ENCODE measurements at regions of chr2 and their contacts with region 1.

Region 1: GRCh38 chr2:64807417-64807816 is 153.7 kb upstream of the SERTAD2 start:
- DNase-seq: peak; percentile 12
- H3K4me3 Mint-ChIP-seq: peak overlapping the region; percentile 57
- H3K27ac Mint-ChIP-seq: peak overlapping the region; percentile 80
- H3K4me1 Mint-ChIP-seq: peaks cover 37% of the 10 kb centered on the region
- H3K27me3 Mint-ChIP-seq: no peaks in the 10 kb centered on the region

Region 2: GRCh38 chr2:64488050-64488974 is 319.1 kb before region 1 on chr2:
- intact Hi-C with region 1: no loop called
- DNase-seq: peak; percentile 53
- H3K4me3 Mint-ChIP-seq: no peak overlapping the region
- H3K27ac Mint-ChIP-seq: no peak overlapping the region
- H3K4me1 Mint-ChIP-seq: peaks cover 8% of the 10 kb centered on the region
- H3K27me3 Mint-ChIP-seq: peaks cover 24% of the 10 kb centered on the region

Region 3: GRCh38 chr2:64730551-64731262 is 76.7 kb before region 1 on chr2:
- intact Hi-C with region 1: loop called (anchors 2 kb)
- DNase-seq: peak; percentile 35
- H3K4me3 Mint-ChIP-seq: peak overlapping the region; percentile 85
- H3K27ac Mint-ChIP-seq: peak overlapping the region; percentile 89
- H3K4me1 Mint-ChIP-seq: peaks cover 77% of the 10 kb centered on the region
- H3K27me3 Mint-ChIP-seq: no peaks in the 10 kb centered on the region

Region 4: GRCh38 chr2:64819774-64820696 is 12.6 kb after region 1 on chr2:
- intact Hi-C with region 1: loop called (anchors 1 kb)
- DNase-seq: peak; percentile 30
- H3K4me3 Mint-ChIP-seq: peak overlapping the region; percentile 68
- H3K27ac Mint-ChIP-seq: peak overlapping the region; percentile 93
- H3K4me1 Mint-ChIP-seq: peaks cover 39% of the 10 kb centered on the region
- H3K27me3 Mint-ChIP-seq: peaks cover 2% of the 10 kb centered on the region

Region 5: GRCh38 chr2:64865073-64865830 is 57.8 kb after region 1 on chr2:
- intact Hi-C with region 1: loop called (anchors 1 kb)
- DNase-seq: peak; percentile 61
- H3K4me3 Mint-ChIP-seq: peak overlapping the region; percentile 78
- H3K27ac Mint-ChIP-seq: peak overlapping the region; percentile 60
- H3K4me1 Mint-ChIP-seq: peaks cover 6% of the 10 kb centered on the region
- H3K27me3 Mint-ChIP-seq: peaks cover 13% of the 10 kb centered on the region